ENCODE measurements at regions of chr13 and their contacts with region 1.

Region 1: DNA sequence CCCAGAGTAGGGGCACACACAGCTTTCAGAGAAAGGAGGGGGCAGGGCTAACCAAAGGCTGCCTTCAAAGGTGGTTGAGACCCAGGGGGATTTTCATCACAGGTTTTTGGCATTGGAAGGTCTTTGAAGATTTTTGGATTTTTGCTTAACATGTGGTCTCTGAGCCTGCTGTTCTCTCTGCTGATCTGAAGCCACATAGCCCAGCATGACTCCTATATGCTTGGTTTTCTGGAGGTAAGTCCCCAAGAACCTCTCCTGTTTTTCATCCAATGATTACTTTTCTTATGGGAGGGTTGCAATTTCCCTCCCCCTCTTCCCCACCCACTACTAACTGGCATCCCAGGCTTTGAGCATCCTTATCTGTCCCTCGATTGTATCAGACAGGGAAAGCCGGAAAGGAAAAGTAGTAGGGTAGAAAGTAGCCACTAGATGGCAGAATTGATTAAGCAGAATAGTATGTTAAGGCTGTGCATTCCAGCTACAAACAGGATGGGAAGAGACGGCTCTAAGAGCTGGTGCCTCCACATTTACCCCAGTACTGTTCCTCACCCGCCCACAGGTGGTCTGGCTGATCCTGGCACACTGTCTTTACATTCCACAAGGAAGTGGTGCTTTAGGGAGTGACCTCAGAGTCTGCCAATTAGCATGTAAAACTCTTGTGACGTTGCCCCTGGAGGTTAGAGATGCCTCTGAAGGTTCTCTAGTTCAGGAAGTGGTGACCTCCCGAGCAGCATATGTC is 218.9 kb upstream of the EDNRB start:
- DNase-seq: peak; percentile 9 to 41 (median 16)
- ATAC-seq: peak; percentile 91
- H3K4me3 ChIP-seq: no peak overlapping the region
- H3K27ac ChIP-seq: no peak overlapping the region
- H3K4me1 ChIP-seq: no peaks in the 10 kb centered on the region
- H3K27me3 ChIP-seq: no peaks in the 10 kb centered on the region
- CTCF ChIP-seq: peak; percentile 22 to 60 (median 49); a peak in 4 of 6 replicates
- EP300 ChIP-seq: no peak
- POLR2A ChIP-seq: no peak
- RAD21 ChIP-seq: peak; percentile 55 to 69

Region 2: GRCh38 chr13:77506874-77507273 is 630.7 kb before region 1 on chr13:
- CTCF ChIA-PET with region 1: no interaction called
- POLR2A ChIA-PET with region 1: no interaction called
- in situ Hi-C with region 1: no loop called
- intact Hi-C with region 1: no loop called
- DNase-seq: no peak
- ATAC-seq: no peak
- H3K4me3 ChIP-seq: no peak overlapping the region
- H3K27ac ChIP-seq: no peak overlapping the region
- H3K4me1 ChIP-seq: no peaks in the 10 kb centered on the region
- H3K27me3 ChIP-seq: no peaks in the 10 kb centered on the region; a peak in 1 of 5 replicates
- CTCF ChIP-seq: 0 out of 6 replicates have a peak, but pooled peaks of 1 of the 3 experiments have one; percentile 10
- EP300 ChIP-seq: no peak
- POLR2A ChIP-seq: no peak
- RAD21 ChIP-seq: no peak

Region 3: DNA sequence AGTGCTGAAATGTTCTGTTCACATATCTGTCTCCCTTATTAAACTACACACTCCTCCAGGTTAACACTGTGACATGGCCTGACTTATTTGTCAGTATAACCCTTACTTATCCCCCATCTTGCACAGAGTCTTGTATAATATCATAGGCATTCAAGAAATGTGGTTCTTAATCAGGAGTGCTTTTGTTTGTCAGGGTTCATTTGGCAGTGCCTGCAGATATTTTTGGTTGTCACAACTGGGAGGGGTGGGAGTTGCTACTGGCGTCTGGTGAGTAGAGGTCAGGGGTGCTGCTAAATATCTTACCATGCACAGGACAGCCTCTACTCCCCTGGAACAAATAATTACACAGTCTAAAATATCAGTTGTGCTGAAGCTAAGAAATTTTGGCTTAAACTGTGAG is 541.8 kb after region 1 on chr13:
- CTCF ChIA-PET with region 1: no interaction called
- POLR2A ChIA-PET with region 1: no interaction called
- in situ Hi-C with region 1: no loop called
- intact Hi-C with region 1: loop called (anchors 10 kb)
- DNase-seq: no peak
- ATAC-seq: no peak
- H3K4me3 ChIP-seq: no peak overlapping the region
- H3K27ac ChIP-seq: no peak overlapping the region
- H3K4me1 ChIP-seq: no peaks in the 10 kb centered on the region
- H3K27me3 ChIP-seq: peaks cover 0 to 4% of the 10 kb centered on the region in 2 experiments; a peak in 2 of 5 replicates
- CTCF ChIP-seq: no peak
- EP300 ChIP-seq: no peak
- POLR2A ChIP-seq: no peak
- RAD21 ChIP-seq: no peak

Region 4: GRCh38 chr13:78759704-78760103 is 622.1 kb after region 1 on chr13:
- CTCF ChIA-PET with region 1: no interaction called
- POLR2A ChIA-PET with region 1: no interaction called
- in situ Hi-C with region 1: no loop called
- intact Hi-C with region 1: loop called (anchors 10 kb)
- DNase-seq: peak in 2 of 4 experiments; percentile 6 to 25
- ATAC-seq: peak; percentile 81
- H3K4me3 ChIP-seq: no peak overlapping the region
- H3K27ac ChIP-seq: no peak overlapping the region
- H3K4me1 ChIP-seq: no peaks in the 10 kb centered on the region
- H3K27me3 ChIP-seq: no peaks in the 10 kb centered on the region
- CTCF ChIP-seq: peak in 1 of 3 experiments; percentile 13; a peak in 1 of 6 replicates
- EP300 ChIP-seq: no peak
- POLR2A ChIP-seq: no peak
- RAD21 ChIP-seq: no peak

Region 5: DNA sequence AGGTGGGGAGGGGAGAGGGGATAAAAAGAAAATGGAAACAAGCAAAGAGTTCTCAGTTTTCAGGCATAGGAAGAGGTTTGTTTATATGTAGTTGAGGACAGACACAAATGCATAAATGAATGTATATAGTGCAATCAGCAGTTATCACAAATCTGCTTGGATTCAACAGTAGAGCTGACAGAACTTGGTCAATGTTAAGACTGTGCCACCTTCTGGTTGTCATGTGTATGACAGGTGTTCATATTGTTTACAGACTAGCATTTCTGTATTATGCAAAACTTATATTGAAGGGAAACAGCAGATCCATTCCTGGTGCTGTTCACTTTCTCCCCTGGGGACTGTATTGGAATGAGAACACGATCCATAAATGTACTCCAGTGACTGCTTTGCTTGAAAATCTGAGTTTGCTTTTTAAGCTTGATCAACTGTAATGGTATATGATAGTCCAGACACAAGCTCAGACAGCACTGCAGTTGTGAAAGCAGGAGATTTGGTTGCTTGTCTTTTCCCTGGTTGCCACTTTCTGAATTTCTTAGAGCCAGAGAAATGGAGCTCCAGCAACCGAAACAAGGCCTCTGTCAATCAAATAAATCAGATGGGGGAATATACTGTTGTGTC is 840.9 kb after region 1 on chr13:
- CTCF ChIA-PET with region 1: interaction called, 5 read pairs
- POLR2A ChIA-PET with region 1: no interaction called
- in situ Hi-C with region 1: loop called (anchors 25 kb)
- intact Hi-C with region 1: loop called (anchors 1 kb)
- DNase-seq: peak; percentile 20 to 52 (median 26)
- ATAC-seq: peak; percentile 80
- H3K4me3 ChIP-seq: no peak overlapping the region
- H3K27ac ChIP-seq: no peak overlapping the region
- H3K4me1 ChIP-seq: no peaks in the 10 kb centered on the region
- H3K27me3 ChIP-seq: no peaks in the 10 kb centered on the region
- CTCF ChIP-seq: peak; percentile 36 to 57 (median 52); a peak in 5 of 6 replicates
- EP300 ChIP-seq: no peak
- POLR2A ChIP-seq: no peak
- RAD21 ChIP-seq: peak; percentile 56 to 78

Region 6: DNA sequence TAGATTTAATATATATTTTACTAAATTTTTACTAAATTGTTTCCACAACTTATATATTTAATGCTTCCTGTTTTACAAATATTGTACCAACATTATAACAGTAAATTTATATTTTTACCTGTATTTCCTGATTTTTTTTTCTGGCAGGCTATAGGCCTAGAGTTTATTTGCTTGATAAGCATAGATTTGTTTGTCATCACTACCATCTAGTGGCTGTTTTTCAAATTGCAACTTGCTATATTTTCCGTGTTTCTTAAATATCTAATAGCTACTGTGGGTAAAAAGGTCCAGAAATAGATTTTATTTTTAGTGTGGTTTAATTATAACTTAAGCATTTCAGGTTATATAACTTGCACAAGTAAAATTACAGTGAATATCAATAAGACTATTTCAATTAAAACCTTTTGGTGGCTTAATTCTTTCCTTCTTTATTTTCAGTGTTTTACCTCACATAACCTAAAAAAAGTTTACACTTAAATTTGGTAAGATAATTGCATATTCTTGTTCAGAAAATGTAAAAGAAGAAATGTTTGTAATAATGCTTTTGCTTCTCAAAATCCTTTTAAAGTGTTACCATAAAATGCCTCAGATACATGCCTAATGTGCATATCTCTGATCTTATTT is 1404.0 kb after region 1 on chr13:
- CTCF ChIA-PET with region 1: interaction called, 3 read pairs
- POLR2A ChIA-PET with region 1: no interaction called
- in situ Hi-C with region 1: no loop called
- intact Hi-C with region 1: loop called (anchors 5 kb)
- DNase-seq: peak; percentile 13 to 61 (median 20)
- ATAC-seq: peak; percentile 54
- H3K4me3 ChIP-seq: no peak overlapping the region
- H3K27ac ChIP-seq: no peak overlapping the region
- H3K4me1 ChIP-seq: no peaks in the 10 kb centered on the region
- H3K27me3 ChIP-seq: no peaks in the 10 kb centered on the region
- CTCF ChIP-seq: peak; percentile 26 to 76 (median 35); a peak in 4 of 6 replicates
- EP300 ChIP-seq: no peak
- POLR2A ChIP-seq: no peak
- RAD21 ChIP-seq: peak; percentile 84 to 89